Activated CD4-positive, alpha-beta memory T cell treated with anti-CD3 and anti-CD28 coated beads for 36 hours (primary cell): ENCODE measurements at regions of chr17 and their contacts with region 1.

Region 1: GRCh38 chr17:2847381-2848333 is 51.4 kb downstream of the RAP1GAP2 start:
- DNase-seq: no peak
- H3K4me3 Mint-ChIP-seq: no peak overlapping the region
- H3K27ac Mint-ChIP-seq: no peak overlapping the region
- H3K4me1 Mint-ChIP-seq: peaks cover 14% of the 10 kb centered on the region
- H3K27me3 Mint-ChIP-seq: peaks cover 4% of the 10 kb centered on the region

Region 2: GRCh38 chr17:2828397-2829038 is 19.1 kb before region 1 on chr17:
- CTCF ChIA-PET with region 1: interaction called, 7 read pairs
- POLR2A ChIA-PET with region 1: no interaction called
- intact Hi-C with region 1: loop called (anchors 1 kb)
- DNase-seq: peak; percentile 87
- H3K4me3 Mint-ChIP-seq: peak overlapping the region; percentile 7
- H3K27ac Mint-ChIP-seq: no peak overlapping the region
- H3K4me1 Mint-ChIP-seq: peaks cover 21% of the 10 kb centered on the region
- H3K27me3 Mint-ChIP-seq: no peaks in the 10 kb centered on the region

Region 3: GRCh38 chr17:2862197-2862596 is 14.5 kb after region 1 on chr17:
- CTCF ChIA-PET with region 1: interaction called, 42 read pairs
- POLR2A ChIA-PET with region 1: no interaction called
- intact Hi-C with region 1: no loop called
- DNase-seq: no peak
- H3K4me3 Mint-ChIP-seq: no peak overlapping the region
- H3K27ac Mint-ChIP-seq: no peak overlapping the region
- H3K4me1 Mint-ChIP-seq: no peaks in the 10 kb centered on the region
- H3K27me3 Mint-ChIP-seq: no peaks in the 10 kb centered on the region

Region 4: DNA sequence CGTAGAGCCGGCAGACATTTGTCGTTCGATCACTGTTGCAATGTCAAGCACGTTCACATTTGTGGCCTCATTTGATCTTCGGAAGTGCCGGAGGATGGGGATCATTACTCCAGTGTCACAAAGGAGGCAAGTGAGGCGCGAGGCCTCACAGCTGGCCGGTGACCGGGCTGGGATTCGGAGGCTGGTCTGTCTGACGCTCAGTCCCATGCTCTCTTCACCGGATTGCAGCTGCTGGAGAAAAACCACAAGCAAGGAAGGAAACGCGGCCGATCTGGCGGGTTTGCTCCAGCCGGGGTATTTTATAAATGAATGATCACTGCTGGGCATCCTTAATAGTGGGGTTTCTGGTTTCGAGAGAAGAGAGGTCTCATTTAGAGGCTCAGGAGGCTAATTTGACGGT is 88.0 kb after region 1 on chr17:
- CTCF ChIA-PET with region 1: interaction called, 81 read pairs
- POLR2A ChIA-PET with region 1: interaction called, 6 read pairs
- intact Hi-C with region 1: loop called (anchors 1 kb)
- DNase-seq: no peak
- H3K4me3 Mint-ChIP-seq: no peak overlapping the region
- H3K27ac Mint-ChIP-seq: no peak overlapping the region
- H3K4me1 Mint-ChIP-seq: peaks cover 2% of the 10 kb centered on the region
- H3K27me3 Mint-ChIP-seq: no peaks in the 10 kb centered on the region

Region 5: GRCh38 chr17:3012926-3013581 is 165.4 kb after region 1 on chr17:
- CTCF ChIA-PET with region 1: interaction called, 87 read pairs
- POLR2A ChIA-PET with region 1: interaction called, 3 read pairs
- intact Hi-C with region 1: loop called (anchors 1 kb)
- DNase-seq: peak; percentile 71
- H3K4me3 Mint-ChIP-seq: no peak overlapping the region
- H3K27ac Mint-ChIP-seq: no peak overlapping the region
- H3K4me1 Mint-ChIP-seq: no peaks in the 10 kb centered on the region
- H3K27me3 Mint-ChIP-seq: no peaks in the 10 kb centered on the region